K562 (cell line): ENCODE measurements at regions of chr5 and their contacts with region 1.

Region 1: GRCh38 chr5:150801117-150801927 is 22.8 kb downstream of the SMIM3 start:
- DNase-seq: peak; percentile 41 to 72 (median 48)
- ATAC-seq: peak; percentile 93
- H3K4me3 ChIP-seq: peak overlapping the region; percentile 30
- H3K27ac ChIP-seq: peak overlapping the region; percentile 53; the same call in 2 of the 3 replicates
- H3K4me1 ChIP-seq: peaks cover 0 to 8% of the 10 kb centered on the region in 2 experiments; a peak in 2 of 5 replicates
- H3K27me3 ChIP-seq: no peaks in the 10 kb centered on the region
- CTCF ChIP-seq: peak; percentile 51 to 71 (median 66)
- EP300 ChIP-seq: no peak
- POLR2A ChIP-seq: no peak
- RAD21 ChIP-seq: peak; percentile 17 to 64; a peak in 3 of 4 replicates

Region 2: DNA sequence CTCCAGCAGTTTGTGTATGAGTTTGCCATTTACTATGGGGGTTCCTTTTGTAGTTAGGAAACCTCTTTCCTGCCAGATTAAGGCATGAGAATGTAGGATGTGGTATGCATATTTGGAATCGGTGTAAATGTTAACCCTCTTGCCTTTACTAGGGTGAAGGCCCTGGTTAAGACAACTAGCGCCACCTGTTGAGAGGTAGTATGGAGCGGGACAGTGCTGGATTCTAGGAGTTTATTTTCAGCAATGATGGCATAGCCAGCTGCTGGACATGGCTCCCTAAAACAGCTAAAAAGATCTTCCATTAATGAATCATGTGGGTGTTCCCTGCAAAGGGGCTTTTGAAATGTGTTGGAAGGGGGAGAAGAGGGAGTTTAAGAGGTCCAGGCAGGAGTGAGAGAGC is 188.4 kb after region 1 on chr5:
- CTCF ChIA-PET with region 1: no interaction called
- POLR2A ChIA-PET with region 1: no interaction called
- in situ Hi-C with region 1: no loop called
- intact Hi-C with region 1: loop called (anchors 1 kb)
- DNase-seq: peak in 3 of 4 experiments; percentile 19 to 47 (median 37)
- ATAC-seq: peak; percentile 91
- H3K4me3 ChIP-seq: no peak overlapping the region
- H3K27ac ChIP-seq: no peak overlapping the region
- H3K4me1 ChIP-seq: 0 out of 5 replicates have a peak, but pooled peaks cover 0 to 2% of the 10 kb centered on the region in 2 experiments
- H3K27me3 ChIP-seq: no peaks in the 10 kb centered on the region
- CTCF ChIP-seq: peak; percentile 54 to 62 (median 60)
- EP300 ChIP-seq: no peak
- POLR2A ChIP-seq: no peak
- RAD21 ChIP-seq: peak in 1 of 2 experiments; percentile 69; a peak in 2 of 4 replicates

Region 3: GRCh38 chr5:151115274-151115905 is 314.1 kb after region 1 on chr5:
- CTCF ChIA-PET with region 1: no interaction called
- POLR2A ChIA-PET with region 1: no interaction called
- in situ Hi-C with region 1: no loop called
- intact Hi-C with region 1: loop called (anchors 1 kb)
- DNase-seq: peak; percentile 76 to 84 (median 80)
- ATAC-seq: peak; percentile 80
- H3K4me3 ChIP-seq: no peak overlapping the region
- H3K27ac ChIP-seq: no peak overlapping the region
- H3K4me1 ChIP-seq: no peaks in the 10 kb centered on the region; a peak in 1 of 5 replicates
- H3K27me3 ChIP-seq: no peaks in the 10 kb centered on the region
- CTCF ChIP-seq: peak; percentile 95 to 97 (median 95)
- EP300 ChIP-seq: no peak
- POLR2A ChIP-seq: no peak
- RAD21 ChIP-seq: peak; percentile 99 to 100

Region 4: DNA sequence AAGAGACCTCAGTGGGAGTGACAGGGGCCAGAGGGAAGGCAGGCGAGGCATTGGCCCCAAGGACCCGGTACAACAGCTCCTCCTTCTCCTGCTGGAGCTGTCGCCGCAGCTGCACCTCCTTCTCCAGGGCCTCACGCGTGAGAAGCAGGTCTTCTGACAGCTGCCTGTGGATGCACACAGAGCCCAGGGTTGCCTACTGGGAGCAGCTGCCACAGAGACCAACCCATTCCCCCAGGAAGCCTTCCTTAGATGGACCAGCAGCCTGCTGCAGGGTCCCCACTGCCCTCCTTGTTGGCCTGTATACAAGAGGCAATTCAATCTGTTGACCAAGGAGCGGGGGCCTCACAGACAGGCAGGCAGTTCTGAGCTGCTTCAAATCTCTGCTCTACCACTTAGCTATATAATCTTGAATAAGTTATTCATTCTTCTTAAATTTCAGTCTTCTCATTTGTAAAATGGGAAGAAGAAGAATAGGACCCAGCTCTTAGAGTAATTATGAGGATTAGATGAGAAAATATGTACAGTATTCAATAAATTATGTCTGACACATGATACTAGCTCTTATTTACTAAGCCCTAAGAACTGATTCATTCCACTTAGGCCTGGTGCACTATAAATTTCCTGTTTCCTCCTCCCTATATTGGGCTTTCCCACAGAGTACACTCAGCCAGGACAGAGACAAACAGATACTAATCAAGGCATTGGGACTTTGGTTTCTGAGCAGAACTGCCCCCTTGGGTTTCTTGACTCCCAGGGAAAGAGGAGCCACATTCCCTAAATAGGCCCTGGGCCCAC is 382.3 kb after region 1 on chr5:
- CTCF ChIA-PET with region 1: no interaction called
- POLR2A ChIA-PET with region 1: no interaction called
- in situ Hi-C with region 1: no loop called
- intact Hi-C with region 1: no loop called
- DNase-seq: no peak
- ATAC-seq: no peak
- H3K4me3 ChIP-seq: no peak overlapping the region
- H3K27ac ChIP-seq: no peak overlapping the region
- H3K4me1 ChIP-seq: no peaks in the 10 kb centered on the region
- H3K27me3 ChIP-seq: no peaks in the 10 kb centered on the region; a peak in 1 of 5 replicates
- CTCF ChIP-seq: no peak
- EP300 ChIP-seq: no peak
- POLR2A ChIP-seq: no peak
- RAD21 ChIP-seq: no peak